ENCODE measurements at regions of chr12 and their contacts with region 1.

Region 1: DNA sequence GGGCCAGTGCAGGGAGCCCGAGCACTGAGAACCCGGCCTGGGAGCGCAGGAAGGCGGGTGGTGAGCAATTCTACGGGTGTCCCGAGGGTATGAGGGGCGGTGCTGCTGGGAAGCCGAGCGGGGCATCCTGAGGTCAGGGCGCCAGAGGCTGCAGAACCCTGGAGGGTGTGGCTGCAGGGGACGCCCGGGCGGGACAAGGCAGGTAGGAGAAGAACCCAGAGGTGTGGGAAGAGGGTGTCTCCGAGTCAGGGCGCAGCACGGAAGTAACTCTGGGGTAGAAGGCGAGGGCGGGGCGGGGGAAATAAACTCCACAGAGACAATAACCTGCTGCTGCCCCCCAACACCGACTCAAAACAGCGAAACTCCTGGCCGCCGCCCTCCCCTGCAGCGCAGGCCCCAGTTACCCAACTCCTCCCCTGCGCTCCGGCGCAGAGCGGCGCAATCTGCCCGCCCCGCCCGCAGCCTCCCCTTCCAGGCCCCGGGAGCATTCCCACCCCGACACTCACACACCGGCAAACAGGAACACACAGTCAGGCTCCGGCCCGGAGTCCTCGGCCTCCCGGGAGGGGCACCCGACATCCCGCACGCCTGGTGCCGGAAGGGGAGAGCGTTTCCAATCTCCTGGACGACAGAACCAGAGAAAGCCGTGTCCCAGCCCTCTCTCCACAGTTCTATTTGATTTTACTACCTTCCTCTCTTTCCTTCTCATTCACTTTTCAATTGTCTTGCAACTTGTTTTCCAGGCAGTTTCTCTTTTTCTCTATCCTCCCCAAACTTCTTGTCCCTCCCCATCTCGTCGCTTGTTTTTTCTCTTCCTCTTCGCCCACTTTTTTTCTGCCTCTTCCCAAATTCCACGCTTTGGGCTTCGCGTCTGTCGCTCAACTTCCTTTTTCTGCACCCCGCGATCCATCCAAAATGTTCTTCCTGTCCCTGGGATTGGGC is 2.4 kb downstream of the HRK start:
- DNase-seq: peak; percentile 62
- H3K4me3 ChIP-seq: peak overlapping the region; percentile 33 to 51
- H3K27ac ChIP-seq: no peak overlapping the region
- H3K4me1 ChIP-seq: peaks cover 0 to 15% of the 10 kb centered on the region in 2 experiments; a peak in 1 of 4 replicates
- H3K27me3 ChIP-seq: peaks cover 50% of the 10 kb centered on the region
- CTCF ChIP-seq: no peak
- EP300 ChIP-seq: no peak
- RAD21 ChIP-seq: no peak

Region 2: DNA sequence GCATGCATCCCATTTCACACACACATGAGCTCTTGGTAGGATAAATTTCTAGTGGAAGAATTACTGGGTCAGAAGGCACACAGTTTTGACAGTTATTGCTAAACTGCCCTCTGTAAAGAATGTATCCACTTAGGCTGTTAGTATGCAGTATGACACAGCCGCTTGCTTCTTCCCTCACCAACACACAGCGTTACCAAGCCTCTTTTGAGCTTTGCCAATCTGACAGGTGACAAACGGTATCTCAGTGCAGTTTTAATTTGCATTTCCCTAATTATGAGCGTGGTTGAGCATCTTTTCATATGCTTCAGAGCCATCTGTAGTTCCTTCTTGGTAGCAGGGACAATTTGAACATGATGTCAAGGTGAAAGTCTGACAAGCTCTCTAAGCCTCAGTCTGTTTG is 40.5 kb before region 1 on chr12:
- CTCF ChIA-PET with region 1: no interaction called
- POLR2A ChIA-PET with region 1: no interaction called
- DNase-seq: no peak
- H3K4me3 ChIP-seq: no peak overlapping the region
- H3K27ac ChIP-seq: no peak overlapping the region
- H3K4me1 ChIP-seq: no peaks in the 10 kb centered on the region
- H3K27me3 ChIP-seq: no peaks in the 10 kb centered on the region
- CTCF ChIP-seq: no peak
- EP300 ChIP-seq: no peak
- RAD21 ChIP-seq: no peak

Region 3: DNA sequence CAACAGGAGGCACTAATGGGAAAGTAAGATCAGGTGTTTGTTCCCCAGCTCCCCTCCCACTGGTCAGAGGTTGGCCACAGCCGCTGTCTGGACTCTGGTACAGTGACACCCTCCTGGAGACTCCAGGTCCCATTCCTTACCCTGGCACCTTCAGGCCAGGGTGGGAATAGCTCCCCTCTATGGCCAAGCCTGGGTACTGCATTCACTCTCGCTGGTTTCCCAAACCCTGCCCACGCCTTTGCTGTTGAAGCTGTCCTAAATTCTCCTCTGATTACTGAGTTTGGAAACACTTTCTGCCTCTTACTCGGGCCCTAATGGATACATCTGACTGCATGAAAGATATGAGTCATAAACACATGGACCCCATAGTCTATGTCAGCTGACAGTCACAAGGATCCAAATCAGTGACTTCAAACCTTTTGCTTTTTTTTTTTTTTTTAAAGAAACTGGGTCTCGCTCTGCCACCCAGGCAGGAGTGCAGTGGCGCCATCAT is 15.5 kb before region 1 on chr12:
- CTCF ChIA-PET with region 1: interaction called, 19 read pairs
- POLR2A ChIA-PET with region 1: no interaction called
- DNase-seq: peak; percentile 39
- H3K4me3 ChIP-seq: peak overlapping the region in 1 of 2 experiments; percentile 43; a peak in 1 of 4 replicates
- H3K27ac ChIP-seq: no peak overlapping the region
- H3K4me1 ChIP-seq: peaks cover 0 to 13% of the 10 kb centered on the region in 2 experiments; a peak in 1 of 4 replicates
- H3K27me3 ChIP-seq: no peaks in the 10 kb centered on the region
- CTCF ChIP-seq: peak; percentile 62
- EP300 ChIP-seq: no peak
- RAD21 ChIP-seq: no peak

Measured in SK-N-SH (cell line).